Pancreas (tissue), 10 donors: ENCODE measurements at regions of chr14 and their contacts with region 1.

Region 1: DNA sequence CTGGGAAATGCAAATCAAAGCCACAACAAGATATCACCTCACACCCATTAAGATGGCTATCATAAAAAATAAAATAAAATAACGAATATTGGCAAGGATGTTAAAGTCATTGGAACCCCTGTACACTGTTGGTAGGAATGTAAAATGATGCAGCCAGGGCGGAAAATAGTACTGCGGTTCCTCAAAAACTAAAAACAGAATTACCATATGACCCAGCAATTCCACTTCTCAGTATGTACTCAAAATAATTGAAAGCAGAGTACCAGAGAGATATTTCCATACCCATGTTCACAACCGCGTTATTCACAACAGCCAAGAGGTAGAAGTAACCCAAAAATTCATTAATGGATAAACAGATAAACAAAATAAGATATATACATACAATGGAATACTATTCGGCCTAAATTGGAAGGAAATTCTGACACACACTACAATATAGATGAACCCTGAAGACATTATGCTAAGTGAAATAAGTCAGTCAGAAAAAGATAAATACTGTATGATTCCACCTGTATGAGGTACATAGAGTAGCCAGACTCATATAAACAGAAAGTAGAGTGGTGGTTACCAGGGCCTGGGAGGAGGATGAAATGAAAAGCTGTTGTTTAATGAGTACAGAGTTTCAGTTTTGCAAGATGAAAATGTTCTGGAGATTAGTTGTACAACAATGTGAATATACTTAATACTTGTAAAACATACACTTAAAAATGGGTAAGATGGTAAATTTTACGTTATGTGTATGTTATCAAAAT is 84.6 kb downstream of the TXNDC16 start:
- DNase-seq: no peak
- ATAC-seq: no peak
- H3K4me3 ChIP-seq: no peak overlapping the region
- H3K27ac ChIP-seq: no peak overlapping the region
- H3K4me1 ChIP-seq: no peaks in the 10 kb centered on the region
- H3K27me3 ChIP-seq: no peaks in the 10 kb centered on the region
- CTCF ChIP-seq: no peak

Region 2: DNA sequence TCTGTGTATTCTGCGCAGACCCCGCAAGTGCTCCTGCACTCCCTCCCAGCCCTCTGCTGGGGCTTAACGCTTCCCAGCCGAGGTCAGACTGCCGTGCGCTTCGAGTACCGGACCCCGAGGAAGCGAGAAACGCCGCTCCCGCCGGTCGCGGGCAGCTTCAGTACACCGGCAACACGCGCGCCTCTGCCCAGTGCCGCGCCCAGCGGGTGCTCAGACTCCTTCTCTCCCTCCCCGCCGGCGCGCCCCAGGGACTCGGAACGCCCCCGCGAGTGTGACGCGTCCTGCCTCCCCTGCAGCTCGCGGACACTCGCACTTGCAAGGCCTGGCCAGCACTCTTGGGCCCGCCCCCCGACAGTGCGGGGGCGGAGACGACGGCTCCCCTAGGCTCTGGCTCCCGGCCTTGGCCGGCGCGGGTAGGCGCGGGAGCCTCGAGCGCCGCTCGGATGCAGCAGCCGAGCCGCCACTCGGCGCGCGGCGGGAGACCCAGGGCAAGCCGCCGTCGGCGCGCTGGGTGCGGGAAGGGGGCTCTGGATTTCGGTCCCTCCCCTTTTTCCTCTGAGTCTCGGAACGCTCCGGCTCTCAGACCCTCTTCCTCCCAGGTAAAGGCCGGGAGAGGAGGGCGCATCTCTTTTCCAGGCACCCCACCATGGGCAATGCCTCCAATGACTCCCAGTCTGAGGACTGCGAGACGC is 153.6 kb before region 1 on chr14 and contains the start of gene PTGER2:
- intact Hi-C with region 1: loop called in 1 of 3 experiments (anchors 10 kb)
- DNase-seq: peak; percentile 43 to 80 (median 66)
- ATAC-seq: peak; percentile 70 to 87 (median 85)
- H3K4me3 ChIP-seq: peak within 1 kb of the TSS; percentile 33 to 61 (median 34)
- H3K27ac ChIP-seq: peak within 1 kb of the TSS in 2 of 4 donors; percentile 0 to 22
- H3K4me1 ChIP-seq: no peaks in the 10 kb centered on the region
- H3K27me3 ChIP-seq: peaks cover 0 to 11% (median 1%) of the 10 kb centered on the region in 4 donors
- CTCF ChIP-seq: no peak
- total RNA-seq, gene PTGER2: 0.28 to 2.0 (median 0.54) TPM in 4 of 6 donors, not detected in the others